CD14-positive monocyte (primary cell): ENCODE measurements at regions of chr10 and their contacts with region 1.

Region 1: DNA sequence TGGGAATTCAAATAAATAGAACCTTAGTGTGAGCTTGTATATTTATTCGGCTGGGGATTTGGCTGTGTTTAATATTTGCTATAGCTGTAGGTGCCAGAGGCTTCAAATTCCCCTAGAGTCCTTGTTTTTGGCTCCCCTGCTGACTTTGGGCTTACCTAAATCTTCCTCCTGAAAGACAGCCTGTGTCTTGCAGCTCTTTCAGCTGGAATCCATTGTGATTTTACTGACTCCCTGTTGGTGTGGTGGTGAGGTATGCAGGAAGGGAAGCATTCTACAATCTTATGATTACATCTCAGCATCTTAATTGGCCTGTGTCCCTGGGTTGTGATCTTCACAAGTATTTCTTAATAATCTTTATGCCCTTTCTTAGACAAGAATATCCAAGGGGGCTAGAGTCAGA is 25.9 kb downstream of the FOXI2 start:
- DNase-seq: no peak
- H3K4me3 ChIP-seq: no peak overlapping the region
- H3K4me3 Mint-ChIP-seq: no peak overlapping the region
- H3K27ac ChIP-seq: no peak overlapping the region
- H3K27ac Mint-ChIP-seq: no peak overlapping the region
- H3K4me1 ChIP-seq: no peaks in the 10 kb centered on the region
- H3K4me1 Mint-ChIP-seq: no peaks in the 10 kb centered on the region
- H3K27me3 ChIP-seq: no peaks in the 10 kb centered on the region
- H3K27me3 Mint-ChIP-seq: peaks cover 2 to 8% (median 3%) of the 10 kb centered on the region in 3 donors
- CTCF ChIP-seq: no peak

Region 2: GRCh38 chr10:126235091-126235801 is 1527.7 kb before region 1 on chr10:
- intact Hi-C with region 1: loop called in 1 of 2 experiments (anchors 10 kb)
- DNase-seq: no peak
- H3K4me3 ChIP-seq: no peak overlapping the region
- H3K4me3 Mint-ChIP-seq: no peak overlapping the region
- H3K27ac ChIP-seq: no peak overlapping the region
- H3K27ac Mint-ChIP-seq: no peak overlapping the region
- H3K4me1 ChIP-seq: no peaks in the 10 kb centered on the region
- H3K4me1 Mint-ChIP-seq: no peaks in the 10 kb centered on the region
- H3K27me3 ChIP-seq: no peaks in the 10 kb centered on the region
- H3K27me3 Mint-ChIP-seq: peaks cover 0 to 1% (median 0%) of the 10 kb centered on the region in 3 donors
- CTCF ChIP-seq: no peak

Region 3: DNA sequence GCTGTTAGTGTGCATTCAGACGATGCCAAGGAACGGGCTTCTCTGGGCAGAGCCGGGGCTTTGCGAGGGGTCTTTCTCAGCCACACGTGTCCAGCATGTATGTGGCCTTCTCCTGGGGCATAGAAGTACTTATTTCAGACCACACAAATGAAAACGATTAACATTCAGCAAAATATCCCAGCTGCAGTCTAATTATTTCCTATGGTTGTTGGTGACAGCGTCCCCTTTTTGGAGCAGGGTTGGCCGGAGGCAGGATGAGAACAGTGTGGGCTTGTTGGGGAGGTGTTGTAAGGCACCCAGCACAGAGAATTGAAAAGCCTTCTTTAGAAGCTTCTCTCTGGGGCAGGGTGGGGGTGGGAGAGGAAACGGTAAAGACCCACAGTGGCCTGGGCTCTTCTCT is 198.1 kb after region 1 on chr10:
- intact Hi-C with region 1: no loop called
- DNase-seq: no peak
- H3K4me3 ChIP-seq: no peak overlapping the region
- H3K4me3 Mint-ChIP-seq: no peak overlapping the region
- H3K27ac ChIP-seq: no peak overlapping the region
- H3K27ac Mint-ChIP-seq: peak overlapping the region in 1 of 7 donors; percentile 37
- H3K4me1 ChIP-seq: peaks cover 0 to 2% of the 10 kb centered on the region in 2 donors
- H3K4me1 Mint-ChIP-seq: peaks cover 15% of the 10 kb centered on the region
- H3K27me3 ChIP-seq: no peaks in the 10 kb centered on the region
- H3K27me3 Mint-ChIP-seq: peaks cover 0 to 8% (median 2%) of the 10 kb centered on the region in 3 donors
- CTCF ChIP-seq: no peak

Region 4: DNA sequence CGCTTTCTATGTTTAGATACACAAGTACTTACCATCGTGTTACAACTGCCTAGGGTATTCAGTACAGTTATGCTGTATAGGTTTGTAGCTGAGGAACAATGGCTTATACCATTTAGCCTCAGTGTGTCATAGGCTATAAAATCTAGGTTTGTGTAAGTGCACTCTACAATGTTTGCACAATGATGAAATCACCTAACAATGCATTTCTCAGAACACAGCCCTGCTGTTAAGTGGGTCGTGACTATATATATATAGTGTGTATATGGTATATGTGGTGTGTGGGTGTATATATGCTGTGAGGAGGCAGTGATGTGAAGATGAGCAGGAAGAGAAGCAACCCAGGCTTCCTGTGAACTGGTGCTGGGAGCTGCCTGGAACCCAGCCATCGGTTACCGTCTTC is 428.9 kb after region 1 on chr10:
- intact Hi-C with region 1: no loop called
- DNase-seq: no peak
- H3K4me3 ChIP-seq: no peak overlapping the region
- H3K4me3 Mint-ChIP-seq: no peak overlapping the region
- H3K27ac ChIP-seq: no peak overlapping the region
- H3K27ac Mint-ChIP-seq: no peak overlapping the region
- H3K4me1 ChIP-seq: no peaks in the 10 kb centered on the region
- H3K4me1 Mint-ChIP-seq: no peaks in the 10 kb centered on the region
- H3K27me3 ChIP-seq: no peaks in the 10 kb centered on the region
- H3K27me3 Mint-ChIP-seq: peaks cover 5 to 12% (median 6%) of the 10 kb centered on the region in 3 donors
- CTCF ChIP-seq: no peak